ENCODE measurements at regions of chr1 and their contacts with region 1.

Region 1: DNA sequence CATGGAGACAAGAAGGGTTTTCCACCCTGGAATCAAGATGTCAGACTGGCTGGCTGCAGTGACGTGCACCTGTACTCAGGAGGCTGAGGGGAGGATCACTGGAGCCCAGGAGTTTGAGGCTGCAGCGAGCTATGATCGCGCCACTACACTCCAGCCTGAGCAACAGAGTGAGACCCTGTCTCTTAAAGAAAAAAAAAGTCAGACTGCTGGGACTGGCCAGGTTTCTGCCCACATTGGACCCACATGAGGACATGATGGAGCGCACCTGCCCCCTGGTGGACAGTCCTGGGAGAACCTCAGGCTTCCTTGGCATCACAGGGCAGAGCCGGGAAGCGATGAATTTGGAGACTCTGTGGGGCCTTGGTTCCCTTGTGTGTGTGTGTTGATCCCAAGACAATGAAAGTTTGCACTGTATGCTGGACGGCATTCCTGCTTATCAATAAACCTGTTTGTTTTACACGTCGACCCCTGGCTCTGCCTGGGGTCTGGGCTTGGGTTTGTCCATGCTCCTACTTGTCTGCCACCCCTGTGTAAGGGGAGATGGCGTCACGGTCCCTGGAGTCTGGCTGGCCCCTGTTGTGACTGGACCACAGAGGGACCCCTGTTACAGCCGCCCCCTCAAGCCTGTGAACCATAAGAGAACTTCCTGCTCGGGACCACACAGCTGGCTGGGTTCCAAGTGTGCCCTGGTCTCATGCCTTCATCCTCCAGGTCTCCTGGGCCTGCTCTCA is 20.9 kb upstream of the VPS13D start:
- DNase-seq: no peak
- ATAC-seq: peak; percentile 89
- H3K4me3 ChIP-seq: no peak overlapping the region
- H3K27ac ChIP-seq: no peak overlapping the region
- H3K4me1 ChIP-seq: peaks cover 33% of the 10 kb centered on the region
- H3K27me3 ChIP-seq: no peaks in the 10 kb centered on the region
- CTCF ChIP-seq: peak; percentile 88 to 92 (median 91)
- EP300 ChIP-seq: no peak
- POLR2A ChIP-seq: no peak
- RAD21 ChIP-seq: peak; percentile 98

Region 2: DNA sequence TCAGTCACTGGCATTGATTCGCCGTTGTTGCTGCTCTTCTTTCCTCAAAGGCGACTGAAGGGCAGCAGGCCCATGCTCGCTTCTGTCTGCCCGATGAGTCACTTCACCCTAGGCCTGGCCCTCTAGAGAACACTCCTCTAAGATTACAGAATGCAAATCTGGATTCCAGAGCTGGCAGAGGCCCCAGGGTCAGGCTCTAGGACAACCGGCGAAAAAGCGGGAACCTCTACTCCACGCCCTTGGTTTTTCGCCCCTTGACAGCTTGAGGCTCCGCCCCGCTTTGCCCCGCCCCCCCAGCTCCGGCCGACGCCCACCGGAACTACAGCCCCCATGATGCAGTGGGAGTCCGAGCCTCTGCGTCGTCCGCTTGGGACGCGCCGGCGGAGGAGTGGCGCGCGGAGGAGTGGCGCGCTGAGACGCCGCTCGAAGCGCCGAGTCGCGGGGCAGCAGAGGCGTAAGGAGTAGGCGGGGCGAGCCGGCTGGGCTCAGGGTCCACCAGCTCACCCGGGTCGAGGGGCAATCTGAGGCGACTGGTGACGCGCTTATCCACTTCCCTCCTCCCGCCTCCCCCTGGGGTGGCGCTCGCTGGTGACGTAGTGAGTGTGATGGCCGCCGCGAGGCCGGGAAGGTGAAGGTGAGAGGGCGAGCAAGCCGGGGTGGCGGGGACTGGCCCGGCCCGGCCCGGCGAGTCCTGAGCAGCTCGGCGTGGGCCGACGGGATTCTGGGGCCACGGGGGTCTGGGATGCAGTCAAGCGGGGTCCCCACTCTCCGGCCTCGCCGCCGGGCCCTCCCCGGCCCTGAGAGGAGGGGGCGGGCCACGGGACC is 228.9 kb before region 1 on chr1 and contains the start of gene MFN2:
- CTCF ChIA-PET with region 1: interaction called, 3 read pairs
- POLR2A ChIA-PET with region 1: no interaction called
- RAD21 ChIA-PET with region 1: no interaction called
- SMC1A ChIA-PET with region 1: no interaction called
- in situ Hi-C with region 1: no loop called
- intact Hi-C with region 1: loop called (anchors 10 kb)
- DNase-seq: peak; percentile 83
- ATAC-seq: peak; percentile 96
- H3K4me3 ChIP-seq: peak within 1 kb of the TSS; percentile 99
- H3K27ac ChIP-seq: peak within 1 kb of the TSS; percentile 83
- H3K4me1 ChIP-seq: peaks cover 6% of the 10 kb centered on the region
- H3K27me3 ChIP-seq: no peaks in the 10 kb centered on the region
- CTCF ChIP-seq: no peak
- EP300 ChIP-seq: no peak
- POLR2A ChIP-seq: peak; percentile 92
- RAD21 ChIP-seq: no peak
- polyA plus RNA-seq, gene MFN2: 5.3 to 6.4 TPM

Region 3: GRCh38 chr1:12143631-12144155 is 65.2 kb before region 1 on chr1:
- CTCF ChIA-PET with region 1: interaction called, 4 read pairs
- POLR2A ChIA-PET with region 1: interaction called, 53 read pairs
- RAD21 ChIA-PET with region 1: interaction called, 116 read pairs
- SMC1A ChIA-PET with region 1: interaction called, 15 read pairs
- in situ Hi-C with region 1: no loop called
- intact Hi-C with region 1: loop called (anchors 5 kb)
- DNase-seq: no peak
- ATAC-seq: peak; percentile 27
- H3K4me3 ChIP-seq: no peak overlapping the region
- H3K27ac ChIP-seq: peak overlapping the region; percentile 60
- H3K4me1 ChIP-seq: peaks cover 52% of the 10 kb centered on the region
- H3K27me3 ChIP-seq: no peaks in the 10 kb centered on the region
- CTCF ChIP-seq: peak in 1 of 3 experiments; percentile 21; a peak in 2 of 6 replicates
- EP300 ChIP-seq: no peak
- POLR2A ChIP-seq: peak; percentile 52; the same call in 1 of the 2 replicates
- RAD21 ChIP-seq: no peak

Region 4: GRCh38 chr1:12153181-12153785 is 55.6 kb before region 1 on chr1:
- CTCF ChIA-PET with region 1: interaction called, 6 read pairs
- POLR2A ChIA-PET with region 1: interaction called, 53 read pairs
- RAD21 ChIA-PET with region 1: interaction called, 116 read pairs
- SMC1A ChIA-PET with region 1: interaction called, 15 read pairs
- in situ Hi-C with region 1: no loop called
- intact Hi-C with region 1: no loop called
- DNase-seq: peak; percentile 78
- ATAC-seq: peak; percentile 68
- H3K4me3 ChIP-seq: no peak overlapping the region
- H3K27ac ChIP-seq: peak overlapping the region; percentile 84
- H3K4me1 ChIP-seq: peaks cover 76% of the 10 kb centered on the region
- H3K27me3 ChIP-seq: no peaks in the 10 kb centered on the region
- CTCF ChIP-seq: no peak
- EP300 ChIP-seq: 0 out of 4 replicates have a peak, but pooled peaks of 1 of the 2 experiments have one; percentile 6
- POLR2A ChIP-seq: 0 out of 2 replicates have a peak, but pooled peaks have one; percentile 40
- RAD21 ChIP-seq: no peak

Region 5: GRCh38 chr1:12166834-12167492 is 42.0 kb before region 1 on chr1 and contains the start of gene TNFRSF1B:
- CTCF ChIA-PET with region 1: interaction called, 10 read pairs
- POLR2A ChIA-PET with region 1: no interaction called
- RAD21 ChIA-PET with region 1: interaction called, 8 read pairs
- SMC1A ChIA-PET with region 1: interaction called, 6 read pairs
- in situ Hi-C with region 1: no loop called
- intact Hi-C with region 1: no loop called
- DNase-seq: no peak
- ATAC-seq: peak; percentile 72
- H3K4me3 ChIP-seq: peak within 1 kb of the TSS; percentile 91
- H3K27ac ChIP-seq: peak within 1 kb of the TSS; percentile 82
- H3K4me1 ChIP-seq: peaks cover 47% of the 10 kb centered on the region
- H3K27me3 ChIP-seq: no peaks in the 10 kb centered on the region
- CTCF ChIP-seq: no peak
- EP300 ChIP-seq: no peak
- POLR2A ChIP-seq: peak; percentile 98
- RAD21 ChIP-seq: no peak
- polyA plus RNA-seq, gene TNFRSF1B: 10.1 to 11.6 TPM

Region 6: DNA sequence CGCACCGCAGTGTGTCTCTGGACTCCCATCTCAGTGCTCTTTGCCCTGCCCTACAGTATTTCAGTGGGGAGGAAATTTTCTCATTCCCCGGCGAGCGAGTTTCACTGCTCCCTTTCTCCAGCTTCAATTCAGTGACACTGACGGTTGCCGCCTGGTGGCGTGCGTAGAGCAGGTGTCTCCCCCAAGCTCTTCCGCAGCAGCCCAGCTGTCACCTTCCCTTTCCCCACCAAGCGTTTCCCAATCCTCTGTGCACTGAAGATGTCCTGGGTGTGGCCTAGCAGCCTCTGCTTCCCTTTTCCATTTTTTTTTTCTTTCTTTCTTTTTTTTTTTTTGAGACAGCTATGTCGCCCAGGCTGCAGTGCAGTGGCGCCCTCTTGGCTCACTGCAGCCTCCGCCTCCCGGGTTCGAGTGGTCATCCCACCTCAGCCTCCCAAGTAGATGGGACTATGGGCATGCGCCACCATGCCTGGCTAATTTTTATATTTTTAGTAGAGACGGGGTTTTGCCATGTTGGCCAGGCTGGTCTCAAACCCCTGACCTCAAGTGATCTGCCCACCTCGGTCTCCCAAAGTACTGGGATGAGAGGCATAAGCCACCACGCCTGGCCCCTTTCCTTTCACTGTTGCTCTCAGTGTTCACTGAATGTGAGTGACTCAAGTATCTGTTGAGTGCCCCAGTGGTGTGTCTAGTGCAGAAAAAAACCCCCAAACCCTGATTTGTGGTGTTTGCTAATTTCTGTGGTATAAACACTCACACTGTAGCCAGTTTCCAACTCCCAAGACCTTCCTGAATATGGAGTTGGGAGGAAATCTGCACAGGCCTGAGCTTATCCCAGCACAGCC is 12.1 kb before region 1 on chr1:
- CTCF ChIA-PET with region 1: interaction called, 3 read pairs
- POLR2A ChIA-PET with region 1: no interaction called
- RAD21 ChIA-PET with region 1: interaction called, 11 read pairs
- SMC1A ChIA-PET with region 1: interaction called, 8 read pairs
- in situ Hi-C with region 1: no loop called
- intact Hi-C with region 1: no loop called
- DNase-seq: no peak
- ATAC-seq: peak; percentile 37
- H3K4me3 ChIP-seq: no peak overlapping the region
- H3K27ac ChIP-seq: peak overlapping the region; percentile 9; the same call in 1 of the 2 replicates
- H3K4me1 ChIP-seq: peaks cover 40% of the 10 kb centered on the region
- H3K27me3 ChIP-seq: no peaks in the 10 kb centered on the region
- CTCF ChIP-seq: peak in 2 of 3 experiments; percentile 15 to 34; a peak in 3 of 6 replicates
- EP300 ChIP-seq: no peak
- POLR2A ChIP-seq: no peak
- RAD21 ChIP-seq: no peak

Region 7: GRCh38 chr1:12464598-12465056 is 255.7 kb after region 1 on chr1:
- CTCF ChIA-PET with region 1: no interaction called
- POLR2A ChIA-PET with region 1: no interaction called
- RAD21 ChIA-PET with region 1: no interaction called
- SMC1A ChIA-PET with region 1: no interaction called
- in situ Hi-C with region 1: no loop called
- intact Hi-C with region 1: no loop called
- DNase-seq: no peak
- ATAC-seq: no peak
- H3K4me3 ChIP-seq: no peak overlapping the region
- H3K27ac ChIP-seq: no peak overlapping the region
- H3K4me1 ChIP-seq: no peaks in the 10 kb centered on the region
- H3K27me3 ChIP-seq: no peaks in the 10 kb centered on the region
- CTCF ChIP-seq: no peak
- EP300 ChIP-seq: no peak
- POLR2A ChIP-seq: no peak
- RAD21 ChIP-seq: no peak